AG04450 (cell line): ENCODE measurements at regions of chr18 and their contacts with region 1.

Region 1: DNA sequence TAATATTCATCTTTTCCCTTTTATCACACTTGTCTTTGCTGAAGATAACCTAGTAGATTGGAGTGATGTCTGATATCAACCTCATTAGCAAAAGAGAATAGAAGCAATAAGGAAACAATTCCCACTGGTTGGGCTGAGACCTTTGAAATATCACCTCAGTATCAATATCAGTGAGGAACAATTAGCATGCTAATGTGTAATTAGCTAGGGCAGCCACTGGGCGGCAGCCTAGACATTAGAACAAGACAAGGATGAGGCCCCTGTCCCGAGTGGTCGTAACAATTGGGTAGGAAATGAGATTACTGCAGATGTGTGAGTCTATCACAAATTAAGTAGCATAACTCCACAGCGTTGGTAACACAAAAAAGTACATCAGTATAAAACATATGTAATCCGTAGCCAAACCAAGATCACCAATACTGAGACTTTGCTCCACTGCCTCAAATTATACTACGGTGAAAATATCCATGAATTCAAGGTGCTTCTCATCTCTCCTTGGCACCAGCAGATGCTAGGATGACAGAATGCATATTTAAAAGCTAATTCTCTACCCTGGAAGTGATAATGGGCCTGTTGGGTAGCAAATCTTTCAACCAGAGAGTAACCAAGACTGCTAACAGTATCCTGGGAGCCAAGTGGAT is 99.1 kb downstream of the ALPK2 start:
- DNase-seq: peak; percentile 24
- H3K4me3 ChIP-seq: no peak overlapping the region
- H3K27ac ChIP-seq: no peak overlapping the region
- H3K27me3 ChIP-seq: no peaks in the 10 kb centered on the region
- CTCF ChIP-seq: peak; percentile 87

Region 2: DNA sequence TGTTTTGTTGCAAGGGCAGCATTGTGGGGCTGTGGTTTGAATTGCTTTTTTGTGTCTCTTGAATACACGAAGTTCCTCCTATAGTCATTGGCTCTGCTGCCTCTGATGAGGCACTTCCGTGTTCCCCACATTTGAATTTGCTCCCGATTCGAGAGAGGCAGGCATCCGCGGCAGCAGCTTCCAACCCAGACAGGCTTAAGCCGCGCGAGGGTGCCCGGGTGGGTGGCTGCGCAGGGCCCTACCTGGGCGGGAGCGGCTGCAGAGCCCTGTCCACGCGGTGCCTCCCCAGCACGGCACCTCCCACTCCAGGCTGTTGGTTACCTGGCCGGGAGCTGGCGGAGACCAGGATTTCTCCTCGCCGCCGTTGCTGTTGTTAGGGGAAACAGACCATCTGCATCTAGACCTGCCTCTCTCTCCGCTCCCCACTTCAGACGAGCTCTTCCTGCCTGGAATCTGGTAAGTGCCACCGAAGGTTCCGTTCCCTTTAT is 334.5 kb before region 1 on chr18:
- CTCF ChIA-PET with region 1: no interaction called
- POLR2A ChIA-PET with region 1: no interaction called
- DNase-seq: no peak
- H3K4me3 ChIP-seq: no peak overlapping the region
- H3K27ac ChIP-seq: no peak overlapping the region
- H3K27me3 ChIP-seq: no peaks in the 10 kb centered on the region
- CTCF ChIP-seq: no peak

Region 3: DNA sequence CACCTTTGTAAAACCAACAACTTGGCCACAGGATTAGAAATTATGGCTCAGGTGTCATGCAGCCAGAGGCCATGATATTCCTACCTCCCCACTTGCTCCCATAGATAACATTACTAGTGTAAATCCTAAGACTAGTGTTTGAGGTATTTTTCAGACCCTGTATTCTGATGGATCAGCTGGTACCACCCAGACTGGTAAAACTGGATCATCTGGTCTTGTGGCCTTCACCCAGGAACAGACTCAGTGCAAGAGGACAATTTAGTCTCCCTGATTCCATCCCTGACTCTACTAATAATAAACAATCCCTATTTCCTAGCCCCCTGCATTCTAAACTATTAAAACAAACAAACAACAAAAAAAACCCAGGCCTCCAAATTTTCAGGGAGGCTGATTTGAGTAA is 22.0 kb before region 1 on chr18:
- CTCF ChIA-PET with region 1: no interaction called
- POLR2A ChIA-PET with region 1: no interaction called
- DNase-seq: no peak
- H3K4me3 ChIP-seq: no peak overlapping the region
- H3K27ac ChIP-seq: no peak overlapping the region
- H3K27me3 ChIP-seq: no peaks in the 10 kb centered on the region
- CTCF ChIP-seq: no peak

Region 4: DNA sequence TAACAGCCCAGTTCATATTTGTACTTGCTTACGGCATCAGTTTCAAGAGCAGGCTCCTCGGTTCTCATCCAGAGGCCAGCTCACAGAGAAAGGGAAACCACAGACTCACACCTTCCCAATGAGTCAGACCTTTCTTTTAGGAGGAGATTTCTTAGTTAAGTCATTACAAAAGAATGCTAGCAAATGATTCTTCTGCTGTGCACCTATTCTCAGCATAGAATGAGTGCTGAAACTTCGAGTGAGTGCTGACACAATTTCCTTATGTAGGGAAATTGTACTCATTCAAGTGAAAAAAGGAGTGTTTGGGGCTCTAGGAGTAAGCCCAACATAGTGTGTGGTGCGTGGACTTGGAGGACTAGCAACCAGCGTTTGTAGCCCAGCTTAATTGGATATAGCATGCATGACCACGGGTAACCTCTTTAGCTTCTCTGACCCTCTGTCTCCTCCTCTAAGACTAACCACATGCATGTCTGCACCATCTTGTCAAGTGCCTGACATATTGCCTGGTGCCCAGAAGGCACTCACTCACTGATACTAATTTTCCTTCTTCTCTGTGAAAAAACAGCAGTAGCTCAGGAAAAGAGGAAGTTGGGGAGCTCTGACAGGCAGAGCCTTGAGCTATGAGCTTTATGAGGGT is 12.1 kb after region 1 on chr18:
- CTCF ChIA-PET with region 1: interaction called, 10 read pairs
- POLR2A ChIA-PET with region 1: no interaction called
- DNase-seq: peak; percentile 95
- H3K4me3 ChIP-seq: no peak overlapping the region
- H3K27ac ChIP-seq: peak overlapping the region; percentile 90
- H3K27me3 ChIP-seq: no peaks in the 10 kb centered on the region
- CTCF ChIP-seq: no peak

Region 5: DNA sequence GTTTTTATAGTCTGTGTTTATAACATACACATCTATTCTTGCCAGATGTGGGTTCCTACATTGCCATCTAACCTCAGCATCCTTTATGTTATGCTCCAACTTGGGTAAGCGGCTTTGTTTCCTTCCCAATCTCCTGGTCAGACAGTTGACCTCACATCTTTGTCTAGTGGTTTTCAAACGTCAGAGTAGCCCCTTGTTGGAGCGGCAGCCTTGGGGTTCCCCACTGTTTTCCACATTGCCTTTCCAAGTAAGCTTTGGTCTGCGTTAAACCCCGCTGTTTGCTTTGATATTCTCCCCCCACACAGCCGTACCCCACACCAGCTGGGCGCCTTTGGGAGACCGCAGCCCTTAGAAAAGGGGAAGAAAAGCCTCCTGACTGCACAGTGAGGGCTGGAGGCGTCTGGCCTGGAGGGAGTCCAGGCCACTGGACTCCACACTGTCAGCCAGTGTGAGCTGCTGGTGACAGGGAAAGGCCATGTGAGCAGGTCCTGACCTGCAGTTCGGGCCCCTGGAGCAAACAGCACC is 224.8 kb after region 1 on chr18:
- CTCF ChIA-PET with region 1: interaction called, 14 read pairs
- POLR2A ChIA-PET with region 1: no interaction called
- DNase-seq: no peak
- H3K4me3 ChIP-seq: no peak overlapping the region
- H3K27ac ChIP-seq: no peak overlapping the region
- H3K27me3 ChIP-seq: no peaks in the 10 kb centered on the region
- CTCF ChIP-seq: no peak